Left ventricle myocardium superior (tissue), 1 donor: ENCODE measurements at regions of chr4 and their contacts with region 1.

Region 1: GRCh38 chr4:373062-373839 is 35.6 kb downstream of the ZNF141 start:
- DNase-seq: no peak
- ATAC-seq: no peak

Region 2: DNA sequence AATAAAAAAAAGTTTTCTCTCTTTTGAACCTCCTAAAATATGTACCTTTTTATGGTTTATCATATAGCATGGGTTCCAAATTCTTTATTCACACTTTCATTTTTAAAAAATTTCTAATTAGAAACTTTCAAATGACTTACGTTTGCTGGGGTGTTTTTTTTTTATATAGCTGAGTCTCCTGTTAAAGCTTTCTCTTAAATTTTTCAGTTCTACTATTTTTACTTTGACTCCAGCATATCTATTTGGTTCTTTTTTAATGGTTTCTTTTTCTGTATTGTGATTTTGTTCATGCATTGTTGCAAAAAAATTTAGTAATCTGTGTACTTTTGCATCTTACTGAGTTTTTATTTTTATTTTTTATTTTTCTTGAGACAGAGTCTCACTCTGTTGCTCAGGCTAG is 226.6 kb before region 1 on chr4:
- intact Hi-C with region 1: no loop called
- DNase-seq: no peak
- ATAC-seq: no peak

Region 3: GRCh38 chr4:314296-314903 is 58.9 kb before region 1 on chr4:
- intact Hi-C with region 1: no loop called
- DNase-seq: no peak
- ATAC-seq: no peak

Region 4: DNA sequence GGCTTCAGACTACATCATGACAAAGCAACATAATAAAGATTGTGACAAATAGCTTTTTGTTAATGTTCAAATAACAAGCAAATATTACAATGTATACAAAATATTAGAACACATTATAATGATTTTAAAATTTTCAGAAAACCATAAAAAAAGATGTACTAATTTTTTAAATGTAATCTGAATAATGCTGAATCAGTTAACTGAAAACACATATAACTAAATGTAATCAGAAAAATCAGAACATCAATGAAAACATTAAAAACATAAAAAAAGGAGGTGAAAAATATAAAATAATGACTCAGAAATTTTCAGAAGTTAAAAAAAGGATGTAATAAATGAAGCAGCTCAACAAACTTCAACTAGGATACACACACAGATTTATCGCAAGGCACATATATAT is 72.2 kb after region 1 on chr4:
- intact Hi-C with region 1: loop called (anchors 10 kb)
- DNase-seq: no peak
- ATAC-seq: no peak